AG04450 (cell line): ENCODE measurements at regions of chr5 and their contacts with region 1.

Region 1: GRCh38 chr5:82656341-82656761 is 378.2 kb upstream of the RPS23 start:
- DNase-seq: no peak
- H3K4me3 ChIP-seq: no peak overlapping the region
- H3K27ac ChIP-seq: no peak overlapping the region
- H3K27me3 ChIP-seq: peaks cover 12% of the 10 kb centered on the region
- CTCF ChIP-seq: no peak

Region 2: DNA sequence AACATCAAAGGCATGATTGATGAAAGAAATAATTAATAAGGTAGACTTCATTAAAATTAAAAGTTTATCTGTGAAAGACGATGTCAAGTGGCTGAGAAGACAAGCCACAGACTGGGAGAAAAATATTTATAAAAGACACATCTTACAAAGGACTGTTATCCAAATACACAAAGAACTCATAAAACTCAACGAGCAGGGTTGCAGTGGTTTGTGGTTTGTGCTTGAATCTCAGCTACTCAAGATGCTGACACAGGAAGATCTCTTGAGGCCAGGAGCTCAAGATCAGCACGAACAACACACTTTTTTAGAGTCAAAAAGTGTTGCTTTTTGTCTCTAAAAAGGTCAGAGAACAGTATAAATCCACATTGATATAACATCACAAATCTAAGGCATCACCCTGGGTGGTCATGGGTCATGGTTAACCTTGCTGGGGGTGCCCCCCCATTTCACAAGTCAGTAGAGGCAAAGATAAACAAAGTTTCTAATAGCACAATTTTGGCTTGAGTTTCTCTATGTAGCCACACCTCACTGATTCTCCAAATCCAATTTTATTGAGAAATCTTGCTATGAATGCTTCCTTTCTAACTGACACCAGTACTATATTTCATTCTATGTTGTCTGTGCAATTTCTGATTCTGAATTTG is 35.3 kb before region 1 on chr5:
- CTCF ChIA-PET with region 1: no interaction called
- POLR2A ChIA-PET with region 1: no interaction called
- DNase-seq: no peak
- H3K4me3 ChIP-seq: no peak overlapping the region
- H3K27ac ChIP-seq: no peak overlapping the region
- H3K27me3 ChIP-seq: no peaks in the 10 kb centered on the region
- CTCF ChIP-seq: no peak

Region 3: GRCh38 chr5:82641331-82642003 is 14.9 kb before region 1 on chr5:
- CTCF ChIA-PET with region 1: interaction called, 13 read pairs
- POLR2A ChIA-PET with region 1: no interaction called
- DNase-seq: peak; percentile 65
- H3K4me3 ChIP-seq: no peak overlapping the region
- H3K27ac ChIP-seq: no peak overlapping the region
- H3K27me3 ChIP-seq: no peaks in the 10 kb centered on the region
- CTCF ChIP-seq: peak; percentile 76